Ascending aorta (tissue), 2 donors: ENCODE measurements at regions of chr13 and their contacts with region 1.

Region 1: GRCh38 chr13:40440990-40441820 is 225.2 kb downstream of the FOXO1 start:
- DNase-seq: peak in 1 of 2 donors; percentile 87
- H3K4me3 ChIP-seq: no peak overlapping the region
- H3K27ac ChIP-seq: peak overlapping the region; percentile 71 to 76
- H3K4me1 ChIP-seq: peaks cover 4 to 25% of the 10 kb centered on the region in 2 donors
- H3K27me3 ChIP-seq: no peaks in the 10 kb centered on the region
- CTCF ChIP-seq: no peak

Region 2: GRCh38 chr13:40401911-40402776 is 39.1 kb before region 1 on chr13:
- intact Hi-C with region 1: loop called (anchors 5 kb)
- DNase-seq: peak; percentile 81 to 97
- H3K4me3 ChIP-seq: peak overlapping the region; percentile 28 to 42
- H3K27ac ChIP-seq: peak overlapping the region; percentile 62 to 68
- H3K4me1 ChIP-seq: peaks cover 4 to 16% of the 10 kb centered on the region in 2 donors
- H3K27me3 ChIP-seq: no peaks in the 10 kb centered on the region
- CTCF ChIP-seq: no peak

Region 3: DNA sequence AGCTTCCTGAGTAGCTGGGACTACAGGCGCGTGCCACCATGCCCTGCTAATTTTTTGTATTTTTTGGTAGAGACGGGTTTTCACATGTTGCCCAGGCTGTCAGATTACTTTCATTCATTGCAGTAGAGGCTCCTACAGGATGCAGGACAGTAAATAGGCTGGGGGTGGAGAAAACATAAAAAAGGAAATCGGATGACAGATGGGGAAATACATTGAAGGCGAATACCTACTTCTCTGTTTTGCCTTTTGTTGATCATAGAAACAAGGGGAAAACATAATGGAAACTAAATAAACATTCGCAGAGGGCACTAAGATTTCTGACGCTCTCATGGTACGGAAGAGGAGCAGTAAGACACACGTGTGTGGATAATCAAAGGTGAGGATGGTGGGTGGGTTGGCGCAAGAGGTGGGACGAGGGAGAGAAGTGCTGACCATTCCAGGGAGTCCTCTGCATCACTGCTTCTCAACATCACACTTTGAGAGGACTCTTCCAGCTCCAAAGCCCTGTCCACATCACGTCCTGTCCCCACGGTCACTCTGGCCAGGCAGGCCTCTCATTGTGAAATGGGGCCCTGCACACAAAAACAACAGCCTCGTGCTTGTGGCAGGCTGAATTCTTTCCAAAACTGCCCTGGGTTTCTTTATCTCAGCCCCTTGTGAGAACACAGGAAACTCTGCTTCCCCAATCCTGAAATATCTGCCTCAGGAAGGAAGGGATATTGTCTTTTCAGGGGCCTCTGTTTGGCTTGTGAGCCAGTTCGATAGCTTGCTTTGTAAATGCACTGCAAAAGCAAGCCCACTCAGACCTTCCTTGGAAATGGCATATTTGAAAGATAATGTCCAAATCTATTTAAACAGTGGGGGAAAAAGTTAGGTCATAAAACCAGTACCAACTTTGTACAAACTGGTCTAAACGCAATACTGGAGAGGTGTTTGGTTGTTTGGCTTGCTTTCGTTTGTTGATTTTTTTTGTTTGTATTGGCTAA is 36.7 kb after region 1 on chr13:
- intact Hi-C with region 1: loop called (anchors 5 kb)
- DNase-seq: peak in 1 of 2 donors; percentile 80
- H3K4me3 ChIP-seq: no peak overlapping the region
- H3K27ac ChIP-seq: peak overlapping the region; percentile 66 to 73
- H3K4me1 ChIP-seq: peaks cover 6 to 27% of the 10 kb centered on the region in 2 donors
- H3K27me3 ChIP-seq: no peaks in the 10 kb centered on the region
- CTCF ChIP-seq: no peak

Region 4: GRCh38 chr13:40629678-40630384 is 188.6 kb after region 1 on chr13:
- intact Hi-C with region 1: no loop called
- DNase-seq: no peak
- H3K4me3 ChIP-seq: no peak overlapping the region
- H3K27ac ChIP-seq: no peak overlapping the region
- H3K4me1 ChIP-seq: peaks cover 5 to 13% of the 10 kb centered on the region in 2 donors
- H3K27me3 ChIP-seq: no peaks in the 10 kb centered on the region
- CTCF ChIP-seq: no peak